ENCODE measurements at regions of chr17 and their contacts with region 1.

Region 1: GRCh38 chr17:46044286-46044928 is 45.4 kb downstream of the STH start:
- DNase-seq: peak; percentile 70
- H3K4me3 ChIP-seq: no peak overlapping the region
- H3K27ac ChIP-seq: peak overlapping the region; percentile 2 to 9; a peak in 1 of 4 replicates
- H3K4me1 ChIP-seq: peaks cover 4 to 10% of the 10 kb centered on the region in 2 experiments; a peak in 3 of 4 replicates
- H3K27me3 ChIP-seq: no peaks in the 10 kb centered on the region
- CTCF ChIP-seq: peak; percentile 99
- EP300 ChIP-seq: no peak
- RAD21 ChIP-seq: peak; percentile 83

Region 2: DNA sequence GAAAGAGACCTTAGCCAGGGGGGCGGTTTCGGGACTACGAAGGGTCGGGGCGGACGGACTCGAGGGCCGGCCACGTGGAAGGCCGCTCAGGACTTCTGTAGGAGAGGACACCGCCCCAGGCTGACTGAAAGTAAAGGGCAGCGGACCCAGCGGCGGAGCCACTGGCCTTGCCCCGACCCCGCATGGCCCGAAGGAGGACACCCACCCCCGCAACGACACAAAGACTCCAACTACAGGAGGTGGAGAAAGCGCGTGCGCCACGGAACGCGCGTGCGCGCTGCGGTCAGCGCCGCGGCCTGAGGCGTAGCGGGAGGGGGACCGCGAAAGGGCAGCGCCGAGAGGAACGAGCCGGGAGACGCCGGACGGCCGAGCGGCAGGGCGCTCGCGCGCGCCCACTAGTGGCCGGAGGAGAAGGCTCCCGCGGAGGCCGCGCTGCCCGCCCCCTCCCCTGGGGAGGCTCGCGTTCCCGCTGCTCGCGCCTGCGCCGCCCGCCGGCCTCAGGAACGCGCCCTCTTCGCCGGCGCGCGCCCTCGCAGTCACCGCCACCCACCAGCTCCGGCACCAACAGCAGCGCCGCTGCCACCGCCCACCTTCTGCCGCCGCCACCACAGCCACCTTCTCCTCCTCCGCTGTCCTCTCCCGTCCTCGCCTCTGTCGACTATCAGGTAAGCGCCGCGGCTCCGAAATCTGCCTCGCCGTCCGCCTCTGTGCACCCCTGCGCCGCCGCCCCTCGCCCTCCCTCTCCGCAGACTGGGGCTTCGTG is 150.2 kb before region 1 on chr17 and contains the start of gene MAPT:
- CTCF ChIA-PET with region 1: no interaction called
- POLR2A ChIA-PET with region 1: no interaction called
- DNase-seq: peak; percentile 100
- H3K4me3 ChIP-seq: peak within 1 kb of the TSS; percentile 77 to 92
- H3K27ac ChIP-seq: peak within 1 kb of the TSS in 1 of 2 experiments; percentile 71; a peak in 1 of 4 replicates
- H3K4me1 ChIP-seq: peaks cover 0 to 19% of the 10 kb centered on the region in 2 experiments; a peak in 1 of 4 replicates
- H3K27me3 ChIP-seq: peaks cover 42% of the 10 kb centered on the region
- CTCF ChIP-seq: peak; percentile 83
- EP300 ChIP-seq: no peak; a peak in 1 of 4 replicates
- RAD21 ChIP-seq: peak; percentile 51
- polyA plus RNA-seq, gene MAPT: 0.47 and 0.74 TPM in 2 replicates

Region 3: DNA sequence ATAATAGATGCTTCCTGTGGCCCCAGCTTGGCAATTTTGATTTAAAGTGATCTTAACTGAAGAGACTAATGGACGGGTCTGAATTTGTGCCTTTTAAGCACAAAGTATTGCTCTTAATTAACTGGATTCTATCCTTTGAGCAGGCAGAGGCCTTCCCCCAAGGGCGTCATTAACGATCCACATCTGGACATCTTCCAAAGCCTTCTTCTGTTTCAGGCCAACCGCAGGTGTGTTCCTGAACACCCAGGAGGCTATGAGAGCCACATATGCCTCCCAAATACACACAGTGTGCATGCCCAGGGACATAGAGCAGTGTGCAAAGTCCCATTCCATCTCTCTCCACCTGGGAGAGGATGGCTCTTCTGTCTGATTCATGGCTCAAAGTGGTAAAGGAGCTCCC is 107.8 kb before region 1 on chr17:
- CTCF ChIA-PET with region 1: no interaction called
- POLR2A ChIA-PET with region 1: no interaction called
- DNase-seq: peak; percentile 47
- H3K4me3 ChIP-seq: no peak overlapping the region
- H3K27ac ChIP-seq: no peak overlapping the region
- H3K4me1 ChIP-seq: peaks cover 0 to 15% of the 10 kb centered on the region in 2 experiments; a peak in 1 of 4 replicates
- H3K27me3 ChIP-seq: peaks cover 48% of the 10 kb centered on the region
- CTCF ChIP-seq: no peak
- EP300 ChIP-seq: peak in 1 of 2 experiments; percentile 42; a peak in 1 of 4 replicates
- RAD21 ChIP-seq: 0 out of 2 replicates have a peak, but pooled peaks have one; percentile 3

Region 4: DNA sequence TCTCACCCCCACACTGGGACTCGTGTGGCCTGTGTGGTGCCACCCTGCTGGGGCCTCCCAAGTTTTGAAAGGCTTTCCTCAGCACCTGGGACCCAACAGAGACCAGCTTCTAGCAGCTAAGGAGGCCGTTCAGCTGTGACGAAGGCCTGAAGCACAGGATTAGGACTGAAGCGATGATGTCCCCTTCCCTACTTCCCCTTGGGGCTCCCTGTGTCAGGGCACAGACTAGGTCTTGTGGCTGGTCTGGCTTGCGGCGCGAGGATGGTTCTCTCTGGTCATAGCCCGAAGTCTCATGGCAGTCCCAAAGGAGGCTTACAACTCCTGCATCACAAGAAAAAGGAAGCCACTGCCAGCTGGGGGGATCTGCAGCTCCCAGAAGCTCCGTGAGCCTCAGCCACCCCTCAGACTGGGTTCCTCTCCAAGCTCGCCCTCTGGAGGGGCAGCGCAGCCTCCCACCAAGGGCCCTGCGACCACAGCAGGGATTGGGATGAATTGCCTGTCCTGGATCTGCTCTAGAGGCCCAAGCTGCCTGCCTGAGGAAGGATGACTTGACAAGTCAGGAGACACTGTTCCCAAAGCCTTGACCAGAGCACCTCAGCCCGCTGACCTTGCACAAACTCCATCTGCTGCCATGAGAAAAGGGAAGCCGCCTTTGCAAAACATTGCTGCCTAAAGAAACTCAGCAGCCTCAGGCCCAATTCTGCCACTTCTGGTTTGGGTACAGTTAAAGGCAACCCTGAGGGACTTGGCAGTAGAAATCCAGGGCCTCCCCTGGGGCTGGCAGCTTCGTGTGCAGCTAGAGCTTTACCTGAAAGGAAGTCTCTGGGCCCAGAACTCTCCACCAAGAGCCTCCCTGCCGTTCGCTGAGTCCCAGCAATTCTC is 18.0 kb before region 1 on chr17:
- CTCF ChIA-PET with region 1: interaction called, 50 read pairs
- POLR2A ChIA-PET with region 1: no interaction called
- DNase-seq: no peak
- H3K4me3 ChIP-seq: no peak overlapping the region
- H3K27ac ChIP-seq: no peak overlapping the region; a peak in 1 of 4 replicates
- H3K4me1 ChIP-seq: peaks cover 0 to 14% of the 10 kb centered on the region in 2 experiments; a peak in 1 of 4 replicates
- H3K27me3 ChIP-seq: no peaks in the 10 kb centered on the region
- CTCF ChIP-seq: no peak
- EP300 ChIP-seq: no peak
- RAD21 ChIP-seq: no peak

Region 5: GRCh38 chr17:46071796-46072195 is 27.4 kb after region 1 on chr17:
- CTCF ChIA-PET with region 1: interaction called, 17 read pairs
- POLR2A ChIA-PET with region 1: no interaction called
- DNase-seq: no peak
- H3K4me3 ChIP-seq: no peak overlapping the region
- H3K27ac ChIP-seq: no peak overlapping the region
- H3K4me1 ChIP-seq: peaks cover 0 to 18% of the 10 kb centered on the region in 2 experiments; a peak in 3 of 4 replicates
- H3K27me3 ChIP-seq: no peaks in the 10 kb centered on the region
- CTCF ChIP-seq: no peak
- EP300 ChIP-seq: no peak
- RAD21 ChIP-seq: no peak

Region 6: DNA sequence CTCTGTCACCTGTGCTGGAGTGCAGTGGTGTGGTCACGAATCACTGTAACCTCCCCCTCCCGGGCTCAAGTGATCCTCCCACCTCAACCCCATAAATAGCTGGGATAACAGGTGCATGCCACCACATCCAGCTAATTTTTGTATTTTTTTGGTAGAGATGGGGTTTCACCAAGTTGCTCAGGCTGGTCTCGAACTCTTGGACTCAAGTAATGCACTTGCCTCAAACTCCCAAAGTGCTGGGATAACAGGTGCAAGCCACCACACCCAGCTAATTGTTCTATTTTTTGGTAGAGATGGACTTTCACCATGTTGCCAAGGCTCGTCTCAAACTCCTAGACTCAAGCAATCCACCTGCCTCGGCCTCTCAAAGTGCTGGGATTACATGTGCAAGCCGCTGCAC is 41.1 kb after region 1 on chr17:
- CTCF ChIA-PET with region 1: interaction called, 15 read pairs
- POLR2A ChIA-PET with region 1: no interaction called
- DNase-seq: no peak
- H3K4me3 ChIP-seq: no peak overlapping the region
- H3K27ac ChIP-seq: no peak overlapping the region
- H3K4me1 ChIP-seq: peaks cover 0 to 8% of the 10 kb centered on the region in 2 experiments; a peak in 2 of 4 replicates
- H3K27me3 ChIP-seq: no peaks in the 10 kb centered on the region
- CTCF ChIP-seq: no peak
- EP300 ChIP-seq: no peak
- RAD21 ChIP-seq: no peak

Region 7: GRCh38 chr17:46179375-46179999 is 135.1 kb after region 1 on chr17:
- CTCF ChIA-PET with region 1: interaction called, 27 read pairs
- POLR2A ChIA-PET with region 1: no interaction called
- DNase-seq: no peak
- H3K4me3 ChIP-seq: no peak overlapping the region
- H3K27ac ChIP-seq: no peak overlapping the region
- H3K4me1 ChIP-seq: peaks cover 1 to 14% of the 10 kb centered on the region in 2 experiments
- H3K27me3 ChIP-seq: no peaks in the 10 kb centered on the region
- CTCF ChIP-seq: no peak
- EP300 ChIP-seq: no peak
- RAD21 ChIP-seq: no peak